ENCODE measurements at regions of chr15 and their contacts with region 1.

Region 1: GRCh38 chr15:70097337-70098169 is at the start of gene TLE3:
- DNase-seq: peak; percentile 98
- ATAC-seq: peak; percentile 52
- H3K4me3 ChIP-seq: peak within 1 kb of the TSS; percentile 94
- H3K27ac ChIP-seq: peak within 1 kb of the TSS; percentile 66
- H3K4me1 ChIP-seq: peaks cover 33% of the 10 kb centered on the region
- H3K27me3 ChIP-seq: peaks cover 5% of the 10 kb centered on the region
- CTCF ChIP-seq: peak; percentile 43
- POLR2A ChIP-seq: peak; percentile 91
- RAD21 ChIP-seq: peak; percentile 58
- total RNA-seq, gene TLE3: 5.6 and 6.5 TPM in 2 replicates

Region 2: GRCh38 chr15:69475769-69476358 is 621.7 kb before region 1 on chr15:
- CTCF ChIA-PET with region 1: no interaction called
- POLR2A ChIA-PET with region 1: no interaction called
- dilution Hi-C with region 1: no loop called
- in situ Hi-C with region 1: no loop called
- intact Hi-C with region 1: loop called (anchors 2 kb)
- DNase-seq: peak; percentile 63
- ATAC-seq: peak; percentile 93
- H3K4me3 ChIP-seq: no peak overlapping the region
- H3K27ac ChIP-seq: no peak overlapping the region
- H3K4me1 ChIP-seq: peaks cover 9% of the 10 kb centered on the region
- H3K27me3 ChIP-seq: peaks cover 11% of the 10 kb centered on the region
- CTCF ChIP-seq: peak; percentile 92
- POLR2A ChIP-seq: no peak
- RAD21 ChIP-seq: peak; percentile 94

Region 3: DNA sequence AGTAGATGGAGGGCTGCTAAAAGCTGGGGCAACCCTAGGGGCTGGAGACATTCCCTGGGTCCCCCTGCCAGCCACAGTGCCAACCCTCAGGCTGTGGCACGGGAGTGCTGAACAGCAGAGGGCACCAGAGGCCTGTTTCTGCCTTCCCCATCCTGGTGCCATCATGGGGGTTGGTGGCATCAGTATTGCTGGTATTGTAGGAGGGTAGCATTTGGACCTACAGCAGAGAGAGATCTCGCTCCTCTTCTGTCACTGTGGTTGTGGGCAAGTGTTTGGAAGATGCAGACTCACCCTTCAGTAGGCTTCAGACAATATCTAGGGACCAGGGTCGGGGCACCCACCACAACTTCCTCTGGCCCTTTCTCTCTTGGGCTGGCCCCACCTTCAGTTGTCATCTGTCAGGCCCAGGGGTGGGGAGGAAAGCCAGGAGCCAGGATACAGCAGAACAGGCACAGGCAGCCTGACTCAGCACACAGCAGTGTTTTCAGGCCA is 521.5 kb before region 1 on chr15:
- CTCF ChIA-PET with region 1: no interaction called
- POLR2A ChIA-PET with region 1: no interaction called
- dilution Hi-C with region 1: no loop called
- in situ Hi-C with region 1: no loop called
- intact Hi-C with region 1: loop called (anchors 2 kb)
- DNase-seq: no peak
- ATAC-seq: peak; percentile 74
- H3K4me3 ChIP-seq: no peak overlapping the region
- H3K27ac ChIP-seq: no peak overlapping the region
- H3K4me1 ChIP-seq: no peaks in the 10 kb centered on the region
- H3K27me3 ChIP-seq: peaks cover 65% of the 10 kb centered on the region
- CTCF ChIP-seq: peak; percentile 59
- POLR2A ChIP-seq: no peak
- RAD21 ChIP-seq: peak; percentile 74

Region 4: GRCh38 chr15:69760890-69761568 is 336.5 kb before region 1 on chr15:
- CTCF ChIA-PET with region 1: no interaction called
- POLR2A ChIA-PET with region 1: no interaction called
- dilution Hi-C with region 1: no loop called
- in situ Hi-C with region 1: no loop called
- intact Hi-C with region 1: loop called (anchors 10 kb)
- DNase-seq: peak; percentile 99
- ATAC-seq: peak; percentile 90
- H3K4me3 ChIP-seq: no peak overlapping the region
- H3K27ac ChIP-seq: no peak overlapping the region
- H3K4me1 ChIP-seq: peaks cover 12% of the 10 kb centered on the region
- H3K27me3 ChIP-seq: peaks cover 1% of the 10 kb centered on the region
- CTCF ChIP-seq: no peak
- POLR2A ChIP-seq: no peak
- RAD21 ChIP-seq: no peak

Region 5: DNA sequence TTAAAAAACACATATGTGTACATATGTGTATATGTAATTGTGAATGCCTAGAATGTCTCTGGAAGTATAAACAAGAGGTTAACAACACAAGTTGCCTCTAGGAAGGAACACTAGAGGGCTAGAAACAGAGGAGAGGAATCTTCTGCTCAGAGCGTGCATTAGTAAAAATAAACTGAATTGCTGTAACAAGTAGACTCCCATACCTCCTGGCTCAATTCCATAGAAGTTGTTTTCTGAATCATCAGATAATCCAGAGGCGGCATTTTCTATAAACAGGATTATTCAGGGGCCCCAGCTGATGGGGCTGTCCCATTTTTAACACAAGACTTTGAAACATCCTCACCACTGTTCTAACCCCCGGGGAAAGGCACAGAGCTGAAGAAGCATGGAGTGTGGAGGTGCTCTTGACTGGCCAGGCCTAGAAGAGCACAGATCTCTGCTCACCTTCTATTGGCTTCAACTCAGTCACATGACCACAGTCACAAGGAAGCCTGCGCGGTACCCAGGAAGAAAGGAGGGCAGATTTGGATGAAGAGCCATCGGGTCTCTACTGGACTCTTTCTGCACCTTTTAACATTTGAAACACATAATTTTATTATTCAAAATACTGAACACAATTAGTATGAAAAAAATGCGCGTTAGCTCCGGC is 145.5 kb before region 1 on chr15:
- CTCF ChIA-PET with region 1: no interaction called
- POLR2A ChIA-PET with region 1: no interaction called
- dilution Hi-C with region 1: no loop called
- in situ Hi-C with region 1: no loop called
- intact Hi-C with region 1: loop called (anchors 2 kb)
- DNase-seq: peak; percentile 13
- ATAC-seq: peak; percentile 69
- H3K4me3 ChIP-seq: no peak overlapping the region
- H3K27ac ChIP-seq: no peak overlapping the region
- H3K4me1 ChIP-seq: peaks cover 3% of the 10 kb centered on the region; the same call in 1 of the 2 replicates
- H3K27me3 ChIP-seq: peaks cover 37% of the 10 kb centered on the region
- CTCF ChIP-seq: no peak
- POLR2A ChIP-seq: no peak
- RAD21 ChIP-seq: no peak

Region 6: DNA sequence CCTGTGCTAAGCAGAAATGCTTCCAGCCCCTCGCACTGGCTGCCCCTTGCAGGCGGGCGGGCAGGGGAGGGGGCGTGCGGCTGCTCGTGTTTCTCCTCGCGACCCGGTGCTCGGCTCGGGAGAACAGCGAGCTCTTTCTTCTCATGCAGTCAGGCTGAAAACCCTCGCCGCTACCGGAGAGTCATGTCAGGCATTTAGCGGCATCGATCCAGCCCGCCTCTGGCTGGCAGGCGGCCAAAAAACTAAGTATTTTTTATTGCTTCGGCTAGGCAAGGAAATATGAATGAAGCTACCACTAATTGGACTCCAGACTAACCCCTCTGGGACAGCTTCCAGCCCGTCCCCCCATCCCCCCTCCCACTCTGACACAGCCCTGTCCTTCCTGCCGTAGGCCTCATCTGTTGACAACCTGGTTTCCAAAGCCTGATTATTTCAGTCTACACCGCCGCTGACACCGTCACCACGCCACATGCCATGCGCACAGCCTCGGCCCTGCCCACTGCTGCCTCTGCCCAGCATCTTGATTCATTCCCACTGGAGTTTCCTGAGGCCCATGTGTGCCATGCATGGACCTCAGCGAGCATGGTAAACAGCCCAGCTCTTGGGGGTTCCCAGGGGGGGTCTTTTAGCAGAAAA is 35.1 kb before region 1 on chr15:
- CTCF ChIA-PET with region 1: no interaction called
- POLR2A ChIA-PET with region 1: no interaction called
- dilution Hi-C with region 1: no loop called
- in situ Hi-C with region 1: no loop called
- intact Hi-C with region 1: loop called (anchors 2 kb)
- DNase-seq: peak; percentile 90
- ATAC-seq: peak; percentile 63
- H3K4me3 ChIP-seq: no peak overlapping the region
- H3K27ac ChIP-seq: no peak overlapping the region
- H3K4me1 ChIP-seq: peaks cover 21% of the 10 kb centered on the region
- H3K27me3 ChIP-seq: no peaks in the 10 kb centered on the region
- CTCF ChIP-seq: no peak
- POLR2A ChIP-seq: no peak
- RAD21 ChIP-seq: no peak; the same call in 1 of the 2 replicates

Region 7: GRCh38 chr15:70083946-70084345 is 13.6 kb before region 1 on chr15:
- CTCF ChIA-PET with region 1: no interaction called
- POLR2A ChIA-PET with region 1: no interaction called
- dilution Hi-C with region 1: no loop called
- in situ Hi-C with region 1: no loop called
- intact Hi-C with region 1: no loop called
- DNase-seq: no peak
- ATAC-seq: no peak
- H3K4me3 ChIP-seq: no peak overlapping the region
- H3K27ac ChIP-seq: no peak overlapping the region
- H3K4me1 ChIP-seq: peaks cover 6% of the 10 kb centered on the region
- H3K27me3 ChIP-seq: no peaks in the 10 kb centered on the region
- CTCF ChIP-seq: no peak
- POLR2A ChIP-seq: no peak
- RAD21 ChIP-seq: no peak

Region 8: DNA sequence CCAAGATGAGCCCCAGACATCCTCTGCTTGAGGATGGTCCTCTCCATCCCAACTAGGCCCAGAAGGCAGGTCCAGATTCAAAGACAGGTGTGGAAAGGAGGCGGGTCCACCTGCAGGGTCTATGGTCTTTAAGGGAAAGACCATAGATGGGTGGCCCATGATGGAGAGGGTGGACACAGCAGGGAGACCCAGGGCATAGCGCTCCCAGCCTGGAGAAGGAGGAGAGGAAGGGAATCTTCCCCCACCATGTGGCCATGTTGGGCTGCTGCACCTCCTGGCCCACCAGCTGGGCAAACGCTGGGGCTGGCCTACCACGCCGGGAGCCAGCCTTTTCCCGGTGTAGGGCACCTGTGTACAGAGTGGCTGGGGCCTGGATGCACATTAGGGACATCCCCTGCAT is 265.3 kb after region 1 on chr15:
- CTCF ChIA-PET with region 1: no interaction called
- POLR2A ChIA-PET with region 1: no interaction called
- dilution Hi-C with region 1: no loop called
- in situ Hi-C with region 1: no loop called
- intact Hi-C with region 1: loop called (anchors 2 kb)
- DNase-seq: peak; percentile 18
- ATAC-seq: peak; percentile 83
- H3K4me3 ChIP-seq: no peak overlapping the region
- H3K27ac ChIP-seq: no peak overlapping the region
- H3K4me1 ChIP-seq: no peaks in the 10 kb centered on the region
- H3K27me3 ChIP-seq: peaks cover 25% of the 10 kb centered on the region; the same call in 1 of the 2 replicates
- CTCF ChIP-seq: peak; percentile 47
- POLR2A ChIP-seq: no peak
- RAD21 ChIP-seq: peak; percentile 63